Sciatic nerve (tissue), 2 donors: ENCODE measurements at regions of chr5 and their contacts with region 1.

Region 1: GRCh38 chr5:134140530-134141201 is 26.2 kb downstream of the TCF7 start:
- DNase-seq: no peak
- ATAC-seq: peak; percentile 76

Region 2: GRCh38 chr5:133715622-133716021 is 425.0 kb before region 1 on chr5:
- intact Hi-C with region 1: no loop called
- DNase-seq: no peak
- ATAC-seq: no peak

Region 3: GRCh38 chr5:134041570-134042411 is 98.9 kb before region 1 on chr5:
- intact Hi-C with region 1: loop called (anchors 5 kb)
- DNase-seq: no peak
- ATAC-seq: no peak

Region 4: DNA sequence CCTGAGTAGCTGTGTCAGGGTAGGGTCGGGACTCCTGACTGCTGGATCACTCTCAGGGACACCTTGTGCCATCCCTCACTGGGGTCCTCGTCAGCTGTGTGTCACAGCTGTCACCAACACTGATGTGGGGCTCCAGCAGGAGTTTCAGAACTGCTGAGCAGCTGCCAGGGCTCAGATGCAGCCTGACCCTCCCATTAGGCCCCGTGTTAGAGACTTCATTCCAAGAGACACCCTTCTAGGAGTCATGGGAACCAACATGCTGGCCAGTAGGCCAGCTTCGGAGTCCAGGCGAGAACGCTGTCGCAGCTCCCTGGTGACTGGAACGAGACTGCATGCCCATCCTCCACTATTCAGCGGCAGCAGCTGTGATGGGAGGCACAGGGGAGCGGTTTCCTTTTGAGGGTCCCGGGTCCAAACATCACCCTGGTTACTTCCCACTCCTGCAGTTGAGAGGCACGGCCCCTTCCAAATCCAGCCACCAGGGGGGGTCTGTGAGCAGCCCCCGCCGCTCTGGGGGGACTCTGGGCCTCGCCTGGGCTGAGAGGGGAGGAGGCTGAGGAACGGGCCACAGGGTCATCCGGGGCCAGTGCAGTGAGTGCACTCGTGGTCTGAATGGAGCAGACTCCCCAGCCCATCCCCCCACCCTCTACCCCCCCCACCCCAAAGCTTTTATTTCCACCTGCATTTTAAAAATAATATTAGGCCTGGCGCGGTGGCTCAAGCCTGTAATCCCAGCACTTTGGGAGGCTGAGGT is 38.8 kb before region 1 on chr5:
- intact Hi-C with region 1: loop called (anchors 2 kb)
- DNase-seq: peak; percentile 77
- ATAC-seq: peak; percentile 71

Region 5: GRCh38 chr5:134568761-134569695 is 428.4 kb after region 1 on chr5:
- intact Hi-C with region 1: no loop called
- DNase-seq: peak; percentile 90
- ATAC-seq: peak; percentile 65